Heart right ventricle (tissue), 16 donors: ENCODE measurements at regions of chr3 and their contacts with region 1.

Region 1: GRCh38 chr3:176939022-176939817 is 258.1 kb downstream of the TBL1XR1 start:
- DNase-seq: peak in 1 of 2 donors; percentile 36
- ATAC-seq: peak in 7 of 8 donors; percentile 68 to 82 (median 76)
- H3K4me3 ChIP-seq: no peak overlapping the region
- H3K27ac ChIP-seq: no peak overlapping the region
- H3K4me1 ChIP-seq: peaks cover 0 to 5% (median 0%) of the 10 kb centered on the region in 9 donors
- H3K27me3 ChIP-seq: no peaks in the 10 kb centered on the region
- CTCF ChIP-seq: peak; percentile 58 to 85 (median 76)

Region 2: GRCh38 chr3:176814285-176814684 is 124.9 kb before region 1 on chr3:
- intact Hi-C with region 1: no loop called
- DNase-seq: peak; percentile 47 to 59
- ATAC-seq: peak; percentile 72 to 92 (median 84)
- H3K4me3 ChIP-seq: no peak overlapping the region
- H3K27ac ChIP-seq: no peak overlapping the region
- H3K4me1 ChIP-seq: peaks cover 0 to 7% (median 0%) of the 10 kb centered on the region in 9 donors
- H3K27me3 ChIP-seq: no peaks in the 10 kb centered on the region
- CTCF ChIP-seq: peak; percentile 34 to 69 (median 64)

Region 3: DNA sequence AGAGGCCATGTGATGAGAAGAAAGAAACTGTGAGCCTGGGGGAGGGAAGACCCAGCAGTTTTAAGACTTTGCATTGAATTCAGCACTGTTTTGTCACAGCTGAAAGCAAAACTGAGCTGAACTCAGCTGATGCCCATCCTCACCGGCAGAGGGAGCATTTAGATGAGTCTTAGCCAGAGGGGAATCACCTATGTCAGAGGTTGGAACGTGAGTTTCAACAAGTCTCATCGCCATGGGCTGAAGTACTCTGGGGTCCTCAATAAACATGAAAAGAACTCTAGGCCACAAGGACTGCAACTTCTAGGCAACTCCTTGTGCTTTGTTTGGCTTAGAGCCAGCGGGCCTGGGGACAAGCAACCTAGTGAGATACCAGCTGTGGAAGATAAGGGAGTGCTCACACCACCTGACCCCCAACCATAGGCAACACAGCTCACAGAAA is 66.4 kb before region 1 on chr3:
- intact Hi-C with region 1: loop called in 8 of 10 experiments (anchors 1 to 10 kb)
- DNase-seq: peak in 1 of 2 donors; percentile 45
- ATAC-seq: peak in 7 of 8 donors; percentile 61 to 75 (median 75)
- H3K4me3 ChIP-seq: no peak overlapping the region
- H3K27ac ChIP-seq: no peak overlapping the region
- H3K4me1 ChIP-seq: peaks cover 0 to 11% (median 0%) of the 10 kb centered on the region in 9 donors
- H3K27me3 ChIP-seq: no peaks in the 10 kb centered on the region
- CTCF ChIP-seq: peak; percentile 52 to 80 (median 72)

Region 4: GRCh38 chr3:176879710-176880109 is 59.5 kb before region 1 on chr3:
- intact Hi-C with region 1: loop called in 4 of 10 experiments (anchors 5 to 10 kb)
- DNase-seq: no peak
- ATAC-seq: no peak
- H3K4me3 ChIP-seq: no peak overlapping the region
- H3K27ac ChIP-seq: no peak overlapping the region
- H3K4me1 ChIP-seq: no peaks in the 10 kb centered on the region
- H3K27me3 ChIP-seq: no peaks in the 10 kb centered on the region
- CTCF ChIP-seq: no peak